Left ventricle myocardium inferior (tissue), 1 donor: ENCODE measurements at regions of chr10 and their contacts with region 1.

Region 1: DNA sequence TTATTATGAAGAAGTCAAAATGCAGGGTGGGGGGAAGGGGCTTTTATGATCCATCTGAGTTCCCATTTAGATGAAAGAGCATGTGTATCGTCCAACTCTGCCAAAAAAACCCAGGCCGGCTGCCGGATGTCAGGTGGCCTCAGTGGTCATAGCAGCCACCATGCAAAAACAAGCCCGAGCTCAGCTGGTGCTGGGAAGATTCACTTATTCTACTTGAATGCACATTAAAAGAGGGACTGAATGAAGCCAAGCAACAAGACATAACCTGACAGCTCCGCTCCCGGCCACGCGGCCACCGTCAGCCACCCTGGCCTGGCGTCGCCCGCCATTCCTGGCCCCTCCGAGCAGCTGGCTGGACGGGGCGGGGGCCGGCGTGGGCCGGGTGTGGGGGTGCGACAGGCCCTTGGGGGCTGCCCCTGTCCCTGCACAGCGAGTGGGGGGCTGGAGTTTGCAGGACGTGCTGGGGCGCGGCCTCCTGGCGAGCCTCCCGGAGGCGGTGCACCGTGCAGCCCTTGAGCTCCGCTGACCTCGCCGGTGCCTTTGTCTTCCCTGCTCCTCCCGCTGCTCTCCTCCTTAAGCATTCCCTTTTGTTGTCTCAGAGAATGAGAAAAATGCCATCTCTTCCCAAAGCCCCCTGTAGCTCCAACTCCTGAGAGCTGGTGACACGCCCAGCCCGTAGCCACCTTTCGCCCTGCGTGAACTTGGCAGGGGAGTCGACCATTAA is 67.8 kb downstream of the EBF3 start:
- DNase-seq: no peak
- H3K4me3 ChIP-seq: no peak overlapping the region
- H3K27ac ChIP-seq: no peak overlapping the region
- H3K4me1 ChIP-seq: peaks cover 75% of the 10 kb centered on the region
- H3K27me3 ChIP-seq: peaks cover 45% of the 10 kb centered on the region
- CTCF ChIP-seq: no peak

Region 2: DNA sequence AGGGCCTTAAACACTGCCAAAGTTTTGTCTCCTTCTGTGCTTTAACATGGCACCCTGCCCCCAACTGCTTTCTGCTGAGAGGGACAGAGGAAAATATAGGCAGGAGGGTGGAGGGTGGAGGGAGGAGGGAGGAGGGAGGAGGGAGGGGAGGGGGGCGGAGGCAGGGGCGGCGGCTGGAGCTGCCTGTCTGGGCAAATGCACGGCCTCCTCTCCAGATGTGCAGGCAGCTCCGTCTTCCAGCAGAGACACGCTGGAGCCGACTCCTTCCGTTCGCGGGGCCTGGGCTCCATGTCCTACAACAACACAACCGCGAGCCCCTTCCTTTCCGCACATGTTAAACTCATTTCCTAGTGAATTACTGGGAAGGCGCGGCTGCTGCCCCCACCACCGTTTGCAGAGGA is 53.6 kb after region 1 on chr10:
- intact Hi-C with region 1: loop called (anchors 10 kb)
- DNase-seq: peak; percentile 83
- H3K4me3 ChIP-seq: peak overlapping the region; percentile 44
- H3K27ac ChIP-seq: peak overlapping the region; percentile 93
- H3K4me1 ChIP-seq: peaks cover 79% of the 10 kb centered on the region
- H3K27me3 ChIP-seq: peaks cover 33% of the 10 kb centered on the region
- CTCF ChIP-seq: no peak